K562 (cell line): ENCODE measurements at regions of chr14 and their contacts with region 1.

Region 1: GRCh38 chr14:90805662-90806540 is 10.3 kb downstream of the TTC7B start:
- DNase-seq: peak; percentile 40 to 83 (median 62)
- ATAC-seq: peak; percentile 39
- H3K4me3 ChIP-seq: peak overlapping the region; percentile 9; the same call in 1 of the 2 replicates
- H3K27ac ChIP-seq: peak overlapping the region; percentile 97
- H3K4me1 ChIP-seq: peaks cover 66 to 84% of the 10 kb centered on the region in 2 experiments
- H3K27me3 ChIP-seq: no peaks in the 10 kb centered on the region
- CTCF ChIP-seq: no peak
- EP300 ChIP-seq: peak; percentile 44; the same call in 1 of the 2 replicates
- POLR2A ChIP-seq: no peak; the same call in 1 of the 2 replicates
- RAD21 ChIP-seq: no peak

Region 2: GRCh38 chr14:90383075-90383730 is 422.7 kb before region 1 on chr14:
- CTCF ChIA-PET with region 1: no interaction called
- POLR2A ChIA-PET with region 1: no interaction called
- in situ Hi-C with region 1: no loop called
- intact Hi-C with region 1: loop called (anchors 5 kb)
- DNase-seq: peak; percentile 96 to 98 (median 96)
- ATAC-seq: peak; percentile 93
- H3K4me3 ChIP-seq: peak overlapping the region; percentile 59
- H3K27ac ChIP-seq: peak overlapping the region; percentile 97
- H3K4me1 ChIP-seq: peaks cover 27 to 31% of the 10 kb centered on the region in 2 experiments
- H3K27me3 ChIP-seq: no peaks in the 10 kb centered on the region
- CTCF ChIP-seq: peak in 2 of 3 experiments; percentile 5 to 8; a peak in 1 of 6 replicates
- EP300 ChIP-seq: peak; percentile 12; the same call in 1 of the 2 replicates
- POLR2A ChIP-seq: peak; percentile 89
- RAD21 ChIP-seq: no peak

Region 3: DNA sequence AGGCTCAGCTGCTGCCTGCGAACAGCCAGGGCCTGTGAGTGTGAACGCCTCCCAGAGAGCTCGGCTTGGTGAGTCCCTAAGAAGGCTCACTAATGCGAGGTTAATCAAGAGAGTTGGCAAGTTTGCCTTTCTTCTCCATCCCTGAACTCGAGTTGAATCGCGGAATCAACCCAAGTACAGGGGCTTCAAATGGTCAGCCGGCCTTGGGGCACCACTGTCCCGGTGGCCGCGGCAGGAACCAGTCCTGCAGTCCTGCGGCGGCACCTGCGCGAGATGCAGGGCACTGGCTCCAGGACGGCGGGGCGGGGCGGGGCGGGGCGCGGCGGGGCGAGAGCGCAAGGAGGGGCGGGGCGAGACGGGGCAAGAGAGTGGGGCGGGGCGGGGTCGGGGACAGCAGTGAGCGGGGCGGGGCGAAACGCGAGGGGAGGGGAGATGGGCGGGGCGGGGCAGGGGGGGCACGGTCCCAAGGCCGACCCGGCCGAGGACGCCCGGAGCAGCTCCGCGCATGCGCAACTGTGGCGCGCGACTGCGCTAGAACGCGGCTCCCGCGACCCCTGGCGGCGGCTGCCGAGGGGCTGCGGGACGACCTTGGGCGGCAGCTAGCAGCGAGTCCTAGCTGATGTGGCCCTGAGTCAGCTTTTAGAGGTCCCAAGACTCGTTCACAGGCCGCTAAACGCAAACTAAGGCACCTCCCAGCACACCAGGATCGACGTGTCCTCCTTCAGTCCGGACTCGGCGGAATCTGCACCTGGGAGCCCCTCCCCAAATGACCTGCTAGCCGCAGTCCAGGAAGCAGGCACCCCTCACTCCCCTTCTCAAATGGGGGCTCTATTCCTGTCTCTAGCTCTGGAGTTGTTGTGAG is 47.6 kb before region 1 on chr14:
- CTCF ChIA-PET with region 1: no interaction called
- POLR2A ChIA-PET with region 1: interaction called, 3 read pairs
- in situ Hi-C with region 1: no loop called
- intact Hi-C with region 1: loop called (anchors 2 kb)
- DNase-seq: peak; percentile 92 to 98 (median 98)
- ATAC-seq: peak; percentile 98
- H3K4me3 ChIP-seq: peak overlapping the region; percentile 28; the same call in 1 of the 2 replicates
- H3K27ac ChIP-seq: peak overlapping the region; percentile 87
- H3K4me1 ChIP-seq: peaks cover 10 to 12% of the 10 kb centered on the region in 2 experiments; a peak in 4 of 5 replicates
- H3K27me3 ChIP-seq: no peaks in the 10 kb centered on the region
- CTCF ChIP-seq: peak; percentile 78 to 86 (median 84)
- EP300 ChIP-seq: 0 out of 2 replicates have a peak, but pooled peaks have one; percentile 21
- POLR2A ChIP-seq: 0 out of 2 replicates have a peak, but pooled peaks have one; percentile 37
- RAD21 ChIP-seq: peak; percentile 43 to 64

Region 4: DNA sequence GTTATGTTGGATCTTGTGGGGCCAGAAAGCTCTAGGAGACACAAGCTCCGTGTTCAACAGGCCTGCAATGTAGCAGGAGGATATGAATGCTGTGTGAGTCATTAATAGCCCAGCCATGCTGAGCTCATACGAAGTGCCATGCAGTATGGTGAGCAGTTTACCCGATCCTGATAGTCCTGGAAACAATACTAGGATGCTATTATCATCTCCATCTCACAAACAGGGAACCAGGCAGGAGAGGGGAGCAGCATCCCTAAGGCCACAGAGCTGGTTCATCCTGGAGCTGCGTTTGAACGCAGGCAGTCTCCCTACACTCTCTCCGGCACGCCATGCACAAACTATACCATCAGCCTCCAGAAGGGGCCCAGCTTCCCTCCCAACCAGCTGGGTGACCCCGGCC is 10.2 kb before region 1 on chr14:
- CTCF ChIA-PET with region 1: no interaction called
- POLR2A ChIA-PET with region 1: interaction called, 10 read pairs
- in situ Hi-C with region 1: no loop called
- intact Hi-C with region 1: no loop called
- DNase-seq: no peak
- ATAC-seq: no peak
- H3K4me3 ChIP-seq: no peak overlapping the region
- H3K27ac ChIP-seq: no peak overlapping the region; the same call in 2 of the 3 replicates
- H3K4me1 ChIP-seq: peaks cover 16 to 25% of the 10 kb centered on the region in 2 experiments; a peak in 4 of 5 replicates
- H3K27me3 ChIP-seq: no peaks in the 10 kb centered on the region
- CTCF ChIP-seq: no peak
- EP300 ChIP-seq: no peak
- POLR2A ChIP-seq: no peak
- RAD21 ChIP-seq: no peak